Caco-2 (cell line): ENCODE measurements at regions of chr5 and their contacts with region 1.

Region 1: GRCh38 chr5:129767906-129768380 is 20.0 kb downstream of the MINAR2 start:
- DNase-seq: peak; percentile 76 to 83
- H3K4me3 ChIP-seq: no peak overlapping the region
- H3K4me3 Mint-ChIP-seq: no peak overlapping the region
- H3K27ac Mint-ChIP-seq: no peak overlapping the region
- H3K4me1 ChIP-seq: no peaks in the 10 kb centered on the region; the same call in 1 of the 2 replicates
- H3K4me1 Mint-ChIP-seq: no peaks in the 10 kb centered on the region
- H3K27me3 ChIP-seq: no peaks in the 10 kb centered on the region
- H3K27me3 Mint-ChIP-seq: no peaks in the 10 kb centered on the region
- CTCF ChIP-seq: peak; percentile 95 to 96

Region 2: GRCh38 chr5:128213340-128213739 is 1554.6 kb before region 1 on chr5:
- CTCF ChIA-PET with region 1: no interaction called
- POLR2A ChIA-PET with region 1: no interaction called
- intact Hi-C with region 1: loop called (anchors 10 kb)
- DNase-seq: peak; percentile 60 to 69
- H3K4me3 ChIP-seq: no peak overlapping the region
- H3K4me3 Mint-ChIP-seq: no peak overlapping the region
- H3K27ac Mint-ChIP-seq: no peak overlapping the region
- H3K4me1 ChIP-seq: no peaks in the 10 kb centered on the region
- H3K4me1 Mint-ChIP-seq: no peaks in the 10 kb centered on the region
- H3K27me3 ChIP-seq: no peaks in the 10 kb centered on the region
- H3K27me3 Mint-ChIP-seq: no peaks in the 10 kb centered on the region
- CTCF ChIP-seq: peak; percentile 74 to 87

Region 3: GRCh38 chr5:129361440-129362025 is 406.4 kb before region 1 on chr5:
- CTCF ChIA-PET with region 1: no interaction called
- POLR2A ChIA-PET with region 1: no interaction called
- intact Hi-C with region 1: loop called (anchors 1 kb)
- DNase-seq: peak in 1 of 2 experiments; percentile 12
- H3K4me3 ChIP-seq: no peak overlapping the region
- H3K4me3 Mint-ChIP-seq: no peak overlapping the region
- H3K27ac Mint-ChIP-seq: no peak overlapping the region
- H3K4me1 ChIP-seq: no peaks in the 10 kb centered on the region
- H3K4me1 Mint-ChIP-seq: no peaks in the 10 kb centered on the region
- H3K27me3 ChIP-seq: no peaks in the 10 kb centered on the region
- H3K27me3 Mint-ChIP-seq: no peaks in the 10 kb centered on the region
- CTCF ChIP-seq: peak; percentile 47 to 64

Region 4: GRCh38 chr5:129460936-129461711 is 306.8 kb before region 1 on chr5:
- CTCF ChIA-PET with region 1: no interaction called
- POLR2A ChIA-PET with region 1: no interaction called
- intact Hi-C with region 1: loop called (anchors 1 kb)
- DNase-seq: peak; percentile 63 to 76
- H3K4me3 ChIP-seq: peak overlapping the region; percentile 40
- H3K4me3 Mint-ChIP-seq: peak overlapping the region; percentile 78
- H3K27ac Mint-ChIP-seq: peak overlapping the region; percentile 31
- H3K4me1 ChIP-seq: no peaks in the 10 kb centered on the region; the same call in 1 of the 2 replicates
- H3K4me1 Mint-ChIP-seq: no peaks in the 10 kb centered on the region
- H3K27me3 ChIP-seq: peaks cover 3% of the 10 kb centered on the region
- H3K27me3 Mint-ChIP-seq: peaks cover 29% of the 10 kb centered on the region
- CTCF ChIP-seq: peak; percentile 60 to 80

Region 5: DNA sequence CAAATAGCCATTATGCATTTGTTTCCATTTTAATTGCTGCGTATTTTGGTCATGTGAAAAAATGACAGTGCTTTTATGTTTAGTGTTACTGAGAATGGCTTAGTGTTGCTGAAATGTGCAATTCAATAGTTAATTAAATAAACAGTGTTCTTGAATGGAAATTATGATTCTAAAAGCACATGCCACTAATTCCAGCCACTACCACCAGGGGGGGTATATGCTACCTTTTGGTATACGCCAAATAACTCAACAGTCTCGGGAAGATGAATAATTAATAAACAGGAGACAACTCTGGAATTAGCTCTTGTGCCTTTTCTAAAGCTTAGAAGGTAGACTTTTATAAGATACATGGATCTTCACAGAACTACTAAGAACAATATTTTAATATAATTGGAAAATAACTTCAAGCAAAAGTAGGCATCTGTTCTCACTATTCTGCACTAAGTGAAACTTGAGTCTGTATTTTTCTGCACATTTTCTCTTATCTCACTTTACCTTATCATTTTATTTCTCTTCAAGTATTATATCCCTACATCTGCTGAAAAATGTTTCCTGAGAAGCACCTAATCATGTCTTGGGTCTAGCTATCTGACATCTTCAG is 103.5 kb before region 1 on chr5:
- CTCF ChIA-PET with region 1: no interaction called
- POLR2A ChIA-PET with region 1: no interaction called
- intact Hi-C with region 1: loop called (anchors 1 kb)
- DNase-seq: peak; percentile 51 to 71
- H3K4me3 ChIP-seq: no peak overlapping the region
- H3K4me3 Mint-ChIP-seq: no peak overlapping the region
- H3K27ac Mint-ChIP-seq: no peak overlapping the region
- H3K4me1 ChIP-seq: no peaks in the 10 kb centered on the region
- H3K4me1 Mint-ChIP-seq: no peaks in the 10 kb centered on the region
- H3K27me3 ChIP-seq: no peaks in the 10 kb centered on the region
- H3K27me3 Mint-ChIP-seq: peaks cover 3% of the 10 kb centered on the region
- CTCF ChIP-seq: peak; percentile 78 to 87

Region 6: GRCh38 chr5:129852747-129853352 is 84.9 kb after region 1 on chr5:
- CTCF ChIA-PET with region 1: interaction called, 54 read pairs
- POLR2A ChIA-PET with region 1: no interaction called
- intact Hi-C with region 1: loop called (anchors 1 kb)
- DNase-seq: peak; percentile 77 to 82
- H3K4me3 ChIP-seq: no peak overlapping the region
- H3K4me3 Mint-ChIP-seq: no peak overlapping the region
- H3K27ac Mint-ChIP-seq: no peak overlapping the region
- H3K4me1 ChIP-seq: no peaks in the 10 kb centered on the region
- H3K4me1 Mint-ChIP-seq: no peaks in the 10 kb centered on the region
- H3K27me3 ChIP-seq: no peaks in the 10 kb centered on the region
- H3K27me3 Mint-ChIP-seq: peaks cover 9% of the 10 kb centered on the region
- CTCF ChIP-seq: peak; percentile 86 to 92

Region 7: DNA sequence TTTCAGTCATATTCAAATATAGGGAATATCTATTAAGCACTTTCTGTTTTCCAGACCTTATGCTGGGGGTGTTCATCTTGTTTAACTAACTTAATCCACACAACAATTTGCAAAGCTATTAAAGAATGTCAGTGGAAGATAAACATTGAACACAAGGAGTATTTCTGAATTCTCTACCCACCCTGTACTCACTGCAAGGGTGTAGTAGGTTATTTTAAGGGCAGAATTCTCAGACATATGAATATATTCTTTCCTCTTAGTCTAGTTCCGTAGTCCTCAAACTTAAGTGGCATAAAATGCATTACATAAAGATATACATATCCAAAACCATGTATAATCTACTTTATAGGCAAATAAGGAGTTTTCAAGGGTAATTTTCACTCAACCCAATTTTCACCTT is 116.4 kb after region 1 on chr5:
- CTCF ChIA-PET with region 1: no interaction called
- POLR2A ChIA-PET with region 1: no interaction called
- intact Hi-C with region 1: no loop called
- DNase-seq: no peak
- H3K4me3 ChIP-seq: no peak overlapping the region
- H3K4me3 Mint-ChIP-seq: no peak overlapping the region
- H3K27ac Mint-ChIP-seq: no peak overlapping the region
- H3K4me1 ChIP-seq: no peaks in the 10 kb centered on the region
- H3K4me1 Mint-ChIP-seq: no peaks in the 10 kb centered on the region
- H3K27me3 ChIP-seq: no peaks in the 10 kb centered on the region
- H3K27me3 Mint-ChIP-seq: peaks cover 3% of the 10 kb centered on the region
- CTCF ChIP-seq: no peak

Region 8: DNA sequence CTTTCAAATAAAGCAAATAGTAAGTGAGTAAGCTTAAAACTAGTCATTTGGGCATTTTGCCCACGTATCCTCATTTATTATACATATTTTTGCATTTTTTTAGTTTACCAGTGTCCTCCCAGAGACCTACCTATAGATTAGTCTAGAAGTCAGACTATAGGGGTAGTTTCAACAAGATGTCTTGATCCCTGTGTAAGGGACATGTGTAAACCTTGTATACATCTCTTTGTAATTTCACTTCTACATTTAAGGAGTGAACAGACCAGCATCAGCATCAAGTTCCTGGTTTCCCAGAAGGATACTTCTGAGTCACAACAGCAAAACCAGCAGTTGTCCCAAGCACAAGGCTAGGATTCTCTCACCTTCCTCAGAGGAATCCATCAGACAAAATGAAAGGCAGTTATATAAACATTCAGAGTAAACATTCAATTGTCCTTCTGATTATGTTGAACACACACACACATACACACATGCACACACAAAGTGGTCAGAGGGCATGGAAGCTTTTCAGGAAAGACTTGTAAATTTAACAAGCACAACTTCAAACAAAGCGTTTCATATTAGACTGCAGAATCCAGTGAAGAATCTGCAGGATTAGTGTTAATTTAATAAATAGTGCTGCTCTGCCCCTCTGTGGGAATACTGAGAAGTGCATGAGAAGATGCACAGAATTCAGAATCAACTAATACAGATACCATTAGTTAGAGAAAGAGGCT is 1341.8 kb after region 1 on chr5:
- CTCF ChIA-PET with region 1: no interaction called
- POLR2A ChIA-PET with region 1: no interaction called
- intact Hi-C with region 1: loop called (anchors 1 kb)
- DNase-seq: peak in 1 of 2 experiments; percentile 45
- H3K4me3 ChIP-seq: no peak overlapping the region
- H3K4me3 Mint-ChIP-seq: no peak overlapping the region
- H3K27ac Mint-ChIP-seq: no peak overlapping the region
- H3K4me1 ChIP-seq: no peaks in the 10 kb centered on the region
- H3K4me1 Mint-ChIP-seq: no peaks in the 10 kb centered on the region
- H3K27me3 ChIP-seq: no peaks in the 10 kb centered on the region
- H3K27me3 Mint-ChIP-seq: peaks cover 2% of the 10 kb centered on the region
- CTCF ChIP-seq: peak; percentile 72 to 75